HepG2 (cell line): ENCODE measurements at regions of chr3 and their contacts with region 1.

Region 1: DNA sequence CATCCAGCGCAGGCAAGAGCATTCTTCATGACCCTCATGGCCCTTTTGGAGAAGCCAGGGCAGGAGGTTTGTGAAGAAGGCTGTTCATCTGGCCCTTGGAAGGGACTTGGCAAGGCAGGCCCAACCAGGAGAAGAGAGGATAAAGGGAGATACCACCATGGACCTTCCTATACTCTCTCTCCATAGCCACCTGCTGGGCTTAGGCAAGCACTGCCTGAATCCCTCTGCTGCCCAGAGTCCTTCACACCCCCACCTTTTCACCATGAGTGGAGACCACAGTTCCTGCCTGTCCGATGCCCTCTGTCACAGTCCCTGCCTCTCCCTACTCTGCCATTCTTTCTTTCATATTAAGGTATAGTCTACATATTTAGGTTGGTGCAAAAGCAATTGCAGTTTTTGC is 10.6 kb upstream of the SFMBT1 start:
- DNase-seq: peak; percentile 66
- ATAC-seq: peak; percentile 100
- H3K4me3 ChIP-seq: no peak overlapping the region
- H3K27ac ChIP-seq: no peak overlapping the region
- H3K4me1 ChIP-seq: no peaks in the 10 kb centered on the region
- H3K27me3 ChIP-seq: no peaks in the 10 kb centered on the region; a peak in 1 of 5 replicates
- CTCF ChIP-seq: peak; percentile 71
- EP300 ChIP-seq: no peak
- POLR2A ChIP-seq: no peak
- RAD21 ChIP-seq: peak; percentile 54

Region 2: DNA sequence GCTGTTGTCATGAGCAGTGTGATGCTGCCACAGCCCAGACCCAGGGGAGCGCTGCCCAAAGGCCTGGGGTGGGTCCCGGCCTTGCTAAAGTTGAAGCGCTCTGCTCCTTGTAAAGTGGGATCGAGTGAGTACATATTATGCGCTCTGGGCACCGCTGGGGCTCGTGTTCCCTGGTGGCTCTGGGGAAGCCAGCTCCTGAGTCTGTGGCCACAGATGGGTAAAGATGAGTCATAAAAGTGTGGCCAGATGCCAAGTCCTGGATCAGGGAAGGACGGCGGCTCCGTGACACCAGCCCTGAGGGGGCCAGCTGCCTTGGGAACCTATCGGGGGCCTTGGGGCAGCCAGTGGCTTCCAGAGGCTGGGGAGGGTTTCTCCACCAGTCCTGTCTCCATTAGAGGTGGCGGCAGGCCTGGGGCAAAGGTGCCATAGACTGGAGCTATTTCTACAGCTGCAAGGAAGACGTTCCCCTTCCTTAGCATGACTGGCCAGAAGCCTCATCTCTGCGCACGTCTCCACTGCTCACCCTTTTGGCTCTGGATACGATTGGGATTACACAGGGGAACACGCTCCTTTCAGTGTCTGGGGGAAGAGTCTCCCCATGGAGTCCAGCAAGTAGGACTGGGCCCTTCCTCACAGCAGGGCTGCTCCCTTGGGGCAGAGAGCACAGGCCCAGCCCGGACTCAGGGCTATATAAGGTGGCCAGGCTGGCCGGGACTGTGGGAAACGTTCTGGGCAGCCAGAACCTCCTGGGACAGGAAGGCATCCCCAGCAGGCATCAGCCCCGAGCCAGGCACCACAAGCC is 224.7 kb before region 1 on chr3:
- CTCF ChIA-PET with region 1: no interaction called
- POLR2A ChIA-PET with region 1: no interaction called
- in situ Hi-C with region 1: no loop called
- intact Hi-C with region 1: no loop called
- DNase-seq: peak; percentile 64
- ATAC-seq: peak; percentile 13
- H3K4me3 ChIP-seq: peak overlapping the region in 2 of 3 experiments; percentile 35 to 60; a peak in 3 of 6 replicates
- H3K27ac ChIP-seq: no peak overlapping the region
- H3K4me1 ChIP-seq: peaks cover 75% of the 10 kb centered on the region
- H3K27me3 ChIP-seq: no peaks in the 10 kb centered on the region
- CTCF ChIP-seq: no peak
- EP300 ChIP-seq: no peak
- POLR2A ChIP-seq: no peak
- RAD21 ChIP-seq: no peak

Region 3: GRCh38 chr3:52934630-52935530 is 121.6 kb before region 1 on chr3:
- CTCF ChIA-PET with region 1: interaction called, 5 read pairs
- POLR2A ChIA-PET with region 1: no interaction called
- in situ Hi-C with region 1: no loop called
- intact Hi-C with region 1: loop called (anchors 5 kb)
- DNase-seq: peak; percentile 46
- ATAC-seq: peak; percentile 92
- H3K4me3 ChIP-seq: no peak overlapping the region
- H3K27ac ChIP-seq: no peak overlapping the region
- H3K4me1 ChIP-seq: peaks cover 6% of the 10 kb centered on the region; the same call in 1 of the 2 replicates
- H3K27me3 ChIP-seq: no peaks in the 10 kb centered on the region
- CTCF ChIP-seq: peak; percentile 81
- EP300 ChIP-seq: no peak
- POLR2A ChIP-seq: no peak
- RAD21 ChIP-seq: peak; percentile 26; the same call in 1 of the 2 replicates

Region 4: DNA sequence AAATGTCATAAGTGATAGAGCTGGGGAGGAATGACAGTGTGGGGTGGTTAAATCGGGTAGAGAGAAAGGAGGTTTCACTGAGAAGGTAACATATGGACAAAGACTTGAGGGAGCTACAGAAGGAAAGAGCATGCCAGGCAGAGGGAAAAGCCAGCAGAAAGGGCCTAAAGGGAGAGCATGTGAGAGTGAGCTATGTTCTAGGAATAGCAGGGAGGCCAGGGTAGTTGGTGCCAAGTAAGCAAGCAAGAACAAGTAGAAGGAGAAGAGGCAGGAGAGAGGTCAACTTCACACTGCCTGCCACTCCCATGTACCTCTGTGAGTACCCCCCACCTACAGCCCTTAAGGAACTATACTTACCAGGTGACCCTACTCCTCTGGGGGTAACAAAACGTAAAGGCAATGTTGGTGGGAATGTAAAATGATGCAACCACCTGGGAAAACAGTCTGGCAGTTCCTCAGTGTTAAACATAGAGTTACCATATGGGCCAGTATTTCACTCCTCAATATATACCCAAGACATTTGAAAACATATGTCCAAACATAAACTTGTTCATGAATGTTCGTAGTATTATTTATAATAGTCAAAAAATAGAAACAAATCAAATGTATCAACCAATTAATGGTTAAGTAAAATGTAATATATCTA is 78.2 kb before region 1 on chr3:
- CTCF ChIA-PET with region 1: no interaction called
- POLR2A ChIA-PET with region 1: no interaction called
- in situ Hi-C with region 1: no loop called
- intact Hi-C with region 1: loop called (anchors 10 kb)
- DNase-seq: no peak
- ATAC-seq: no peak
- H3K4me3 ChIP-seq: no peak overlapping the region
- H3K27ac ChIP-seq: no peak overlapping the region
- H3K4me1 ChIP-seq: peaks cover 28% of the 10 kb centered on the region
- H3K27me3 ChIP-seq: no peaks in the 10 kb centered on the region
- CTCF ChIP-seq: no peak
- EP300 ChIP-seq: no peak
- POLR2A ChIP-seq: no peak
- RAD21 ChIP-seq: no peak